ENCODE measurements at regions of chr6 and their contacts with region 1.

Region 1: GRCh38 chr6:107786709-107787588 is 37.2 kb downstream of the SCML4 start:
- DNase-seq: no peak
- ATAC-seq: peak in 1 of 4 donors; percentile 30
- H3K4me3 ChIP-seq: no peak overlapping the region
- H3K27ac ChIP-seq: no peak overlapping the region
- H3K4me1 ChIP-seq: no peaks in the 10 kb centered on the region
- H3K27me3 ChIP-seq: no peaks in the 10 kb centered on the region
- CTCF ChIP-seq: no peak
- POLR2A ChIP-seq: no peak

Region 2: GRCh38 chr6:107853230-107853629 is 66.3 kb after region 1 on chr6:
- intact Hi-C with region 1: loop called in 1 of 2 experiments (anchors 10 kb)
- DNase-seq: no peak
- ATAC-seq: no peak
- H3K4me3 ChIP-seq: no peak overlapping the region
- H3K27ac ChIP-seq: no peak overlapping the region
- H3K4me1 ChIP-seq: no peaks in the 10 kb centered on the region
- H3K27me3 ChIP-seq: no peaks in the 10 kb centered on the region
- CTCF ChIP-seq: no peak
- POLR2A ChIP-seq: no peak

Measured in right lobe of liver (tissue), 6 donors.